CD14-positive monocyte (primary cell): ENCODE measurements at regions of chr14 and their contacts with region 1.

Region 1: DNA sequence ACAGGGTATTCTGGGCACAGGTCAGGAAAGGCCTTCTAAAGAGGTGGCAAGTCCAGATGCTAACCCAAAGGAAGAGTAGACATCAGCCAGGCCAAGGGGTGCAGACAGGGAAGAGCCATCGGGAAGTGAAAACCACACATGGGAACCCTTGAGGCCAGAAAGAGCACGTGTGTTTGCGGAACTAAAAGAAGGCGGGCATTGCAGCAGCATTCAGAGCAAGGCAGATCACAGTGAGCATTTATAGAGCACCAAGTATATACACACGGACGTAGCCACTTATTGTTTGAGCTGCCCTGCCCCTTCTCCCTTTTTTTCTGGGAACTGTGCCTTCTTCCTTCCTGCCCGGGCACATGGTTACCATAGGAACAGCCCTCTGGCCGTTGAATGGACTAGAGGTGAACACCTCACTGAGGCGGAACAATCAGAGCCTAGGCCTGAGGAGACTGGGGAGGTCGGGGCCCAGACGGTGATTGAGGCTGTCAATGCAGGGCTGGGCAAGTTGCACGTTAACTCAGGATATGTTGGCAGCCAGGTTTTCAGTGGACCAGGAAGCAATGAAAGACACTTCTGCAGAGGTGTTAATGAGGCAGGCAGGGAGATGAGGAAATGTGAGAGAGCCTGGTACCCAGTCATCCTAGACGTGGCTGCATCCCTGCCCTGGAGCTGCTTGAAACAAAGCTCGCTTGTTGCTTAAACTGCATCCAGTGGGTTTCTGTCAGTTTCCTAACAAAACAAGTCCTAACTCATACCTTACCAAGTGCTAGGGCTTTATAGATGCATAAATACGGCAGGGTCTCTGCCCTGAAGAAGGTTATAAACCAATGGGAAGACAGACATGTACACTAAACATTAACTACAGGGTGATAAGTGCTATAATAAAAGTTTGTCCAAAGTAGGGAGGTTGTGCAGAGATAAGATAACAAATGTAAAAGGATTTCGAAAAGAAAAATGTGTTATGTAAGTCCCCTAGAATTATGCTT is 34.2 kb downstream of the MOAP1 start:
- DNase-seq: peak; percentile 36 to 70 (median 67)
- H3K4me3 ChIP-seq: peak overlapping the region; percentile 16 to 64 (median 18)
- H3K4me3 Mint-ChIP-seq: peak overlapping the region in 1 of 2 donors; percentile 77
- H3K27ac ChIP-seq: peak overlapping the region; percentile 35 to 62
- H3K27ac Mint-ChIP-seq: peak overlapping the region; percentile 76 to 91 (median 85)
- H3K4me1 ChIP-seq: peaks cover 37 to 44% of the 10 kb centered on the region in 2 donors
- H3K4me1 Mint-ChIP-seq: peaks cover 34% of the 10 kb centered on the region
- H3K27me3 ChIP-seq: no peaks in the 10 kb centered on the region
- H3K27me3 Mint-ChIP-seq: peaks cover 0 to 5% (median 0%) of the 10 kb centered on the region in 3 donors
- CTCF ChIP-seq: no peak

Region 2: GRCh38 chr14:93056166-93056839 is 94.2 kb before region 1 on chr14:
- intact Hi-C with region 1: no loop called
- DNase-seq: no peak
- H3K4me3 ChIP-seq: no peak overlapping the region
- H3K4me3 Mint-ChIP-seq: no peak overlapping the region
- H3K27ac ChIP-seq: peak overlapping the region in 1 of 2 donors; percentile 44
- H3K27ac Mint-ChIP-seq: peak overlapping the region in 5 of 7 donors; percentile 51 to 89 (median 85)
- H3K4me1 ChIP-seq: peaks cover 4 to 12% of the 10 kb centered on the region in 2 donors
- H3K4me1 Mint-ChIP-seq: peaks cover 21% of the 10 kb centered on the region
- H3K27me3 ChIP-seq: no peaks in the 10 kb centered on the region
- H3K27me3 Mint-ChIP-seq: peaks cover 0 to 3% (median 2%) of the 10 kb centered on the region in 3 donors
- CTCF ChIP-seq: no peak

Region 3: GRCh38 chr14:93105362-93105761 is 45.2 kb before region 1 on chr14:
- intact Hi-C with region 1: loop called in 1 of 2 experiments (anchors 5 kb)
- DNase-seq: peak; percentile 77 to 90 (median 81)
- H3K4me3 ChIP-seq: peak overlapping the region in 1 of 3 experiments; percentile 72
- H3K4me3 Mint-ChIP-seq: peak overlapping the region; percentile 27 to 62
- H3K27ac ChIP-seq: peak overlapping the region; percentile 83 to 84
- H3K27ac Mint-ChIP-seq: peak overlapping the region; percentile 89 to 94 (median 93)
- H3K4me1 ChIP-seq: peaks cover 78 to 90% of the 10 kb centered on the region in 2 donors
- H3K4me1 Mint-ChIP-seq: peaks cover 92% of the 10 kb centered on the region
- H3K27me3 ChIP-seq: no peaks in the 10 kb centered on the region
- H3K27me3 Mint-ChIP-seq: peaks cover 0 to 2% (median 0%) of the 10 kb centered on the region in 3 donors
- CTCF ChIP-seq: no peak

Region 4: DNA sequence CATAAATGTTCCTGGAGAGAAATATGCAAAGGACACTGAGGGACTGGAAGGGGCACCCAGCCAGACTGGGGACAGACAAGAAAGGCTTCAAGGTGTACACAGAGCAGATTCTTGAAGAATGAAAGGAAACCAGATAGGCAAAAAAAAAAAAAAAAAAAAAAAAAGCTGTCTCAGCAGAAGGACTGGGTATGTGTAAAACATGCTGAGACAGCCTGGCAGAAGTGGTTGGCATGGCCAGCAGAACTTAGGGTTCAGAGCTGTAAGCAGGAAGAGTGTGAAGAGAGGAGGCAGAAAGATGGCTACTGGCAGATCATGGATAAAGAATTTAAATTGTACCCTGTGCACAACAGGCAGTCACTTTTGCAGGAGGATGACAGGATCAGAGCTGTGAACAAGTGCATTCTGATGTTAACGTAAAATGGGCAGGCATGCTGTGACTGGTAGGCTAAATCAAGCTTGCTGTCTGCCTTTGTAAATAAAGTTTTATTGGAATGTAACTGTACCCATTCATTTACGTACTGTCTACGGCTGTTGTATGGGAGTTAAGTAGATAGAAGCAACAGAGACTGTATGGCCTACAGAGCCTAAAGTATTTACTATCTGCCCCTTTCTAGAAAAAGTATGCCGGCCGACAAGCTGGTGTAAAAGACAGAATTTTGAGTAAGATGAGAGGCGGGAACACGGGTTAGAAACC is 98.8 kb after region 1 on chr14:
- intact Hi-C with region 1: no loop called
- DNase-seq: no peak
- H3K4me3 ChIP-seq: no peak overlapping the region
- H3K4me3 Mint-ChIP-seq: no peak overlapping the region
- H3K27ac ChIP-seq: no peak overlapping the region
- H3K27ac Mint-ChIP-seq: peak overlapping the region in 2 of 7 donors; percentile 19 to 51
- H3K4me1 ChIP-seq: no peaks in the 10 kb centered on the region
- H3K4me1 Mint-ChIP-seq: no peaks in the 10 kb centered on the region
- H3K27me3 ChIP-seq: no peaks in the 10 kb centered on the region
- H3K27me3 Mint-ChIP-seq: no peaks in the 10 kb centered on the region
- CTCF ChIP-seq: no peak

Region 5: DNA sequence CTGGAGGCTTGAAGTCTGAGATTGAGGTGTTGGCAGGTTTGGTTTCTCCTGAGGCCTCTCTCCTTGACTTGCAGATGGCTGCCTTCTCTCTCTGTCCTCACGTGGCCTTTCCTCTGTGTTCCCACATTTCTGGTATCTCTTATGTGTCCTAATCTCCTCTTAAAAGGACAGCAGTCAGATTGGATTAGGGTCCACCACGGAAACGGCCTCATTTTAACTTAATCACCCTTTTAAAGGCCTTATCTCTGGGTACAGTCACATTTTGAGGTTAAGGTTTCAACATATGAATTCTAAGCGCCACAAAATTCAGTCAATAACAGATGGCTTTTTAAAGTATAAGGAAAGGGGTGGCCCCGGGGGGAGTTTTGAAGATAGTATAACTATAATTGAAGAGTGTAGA is 313.8 kb after region 1 on chr14:
- intact Hi-C with region 1: no loop called
- DNase-seq: no peak
- H3K4me3 ChIP-seq: no peak overlapping the region
- H3K4me3 Mint-ChIP-seq: no peak overlapping the region
- H3K27ac ChIP-seq: no peak overlapping the region
- H3K27ac Mint-ChIP-seq: no peak overlapping the region
- H3K4me1 ChIP-seq: no peaks in the 10 kb centered on the region
- H3K4me1 Mint-ChIP-seq: peaks cover 4% of the 10 kb centered on the region
- H3K27me3 ChIP-seq: peaks cover 2 to 7% of the 10 kb centered on the region in 2 donors
- H3K27me3 Mint-ChIP-seq: peaks cover 5 to 7% (median 7%) of the 10 kb centered on the region in 3 donors
- CTCF ChIP-seq: no peak